IMR-90 (cell line): ENCODE measurements at regions of chr11 and their contacts with region 1.

Region 1: DNA sequence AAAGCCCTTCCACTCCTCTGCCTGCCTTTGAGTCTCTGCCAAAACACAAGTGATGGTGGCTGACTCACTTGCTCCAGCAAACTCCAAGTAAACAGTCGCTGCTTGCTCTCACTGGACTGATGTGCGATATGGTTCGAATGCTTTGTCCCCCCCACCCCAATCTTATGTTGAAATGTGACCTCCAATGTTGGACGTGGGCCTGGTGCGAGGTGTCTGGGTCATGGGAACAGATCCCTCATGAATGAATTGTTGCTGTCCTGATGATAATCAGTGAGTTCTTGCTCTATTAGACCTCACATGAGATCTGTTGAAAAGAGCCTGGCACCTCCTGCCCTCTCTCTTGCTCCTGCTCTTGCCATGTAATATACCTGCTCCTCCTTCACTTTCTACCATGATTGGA is 747.9 kb downstream of the OPCML start:
- DNase-seq: peak; percentile 67
- ATAC-seq: peak; percentile 63; the same call in 1 of the 2 replicates
- H3K4me3 ChIP-seq: no peak overlapping the region
- H3K27ac ChIP-seq: no peak overlapping the region
- H3K4me1 ChIP-seq: no peaks in the 10 kb centered on the region
- H3K27me3 ChIP-seq: no peaks in the 10 kb centered on the region
- CTCF ChIP-seq: no peak
- POLR2A ChIP-seq: no peak
- RAD21 ChIP-seq: no peak

Region 2: DNA sequence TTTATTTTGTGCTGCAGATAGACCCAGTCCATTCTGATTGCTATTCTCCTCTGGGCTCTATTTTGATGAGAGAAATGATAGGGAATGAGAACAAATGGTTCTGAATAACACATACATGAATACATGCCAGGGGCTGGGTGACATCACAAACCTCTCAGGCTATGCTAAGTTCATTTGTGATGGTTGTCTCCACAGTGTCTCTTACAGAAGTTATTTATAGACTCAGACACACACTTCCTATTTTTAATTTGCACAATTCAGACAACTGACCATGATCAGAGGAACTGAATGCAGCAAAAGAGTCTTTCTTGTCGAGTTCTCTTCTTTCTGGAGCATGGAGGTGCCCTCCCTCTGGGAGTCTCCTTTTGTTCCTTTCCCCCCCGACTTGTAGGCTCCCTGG is 243.9 kb before region 1 on chr11:
- CTCF ChIA-PET with region 1: no interaction called
- POLR2A ChIA-PET with region 1: no interaction called
- dilution Hi-C with region 1: no loop called
- in situ Hi-C with region 1: no loop called
- intact Hi-C with region 1: loop called (anchors 10 kb)
- DNase-seq: no peak
- ATAC-seq: no peak
- H3K4me3 ChIP-seq: no peak overlapping the region
- H3K27ac ChIP-seq: no peak overlapping the region
- H3K4me1 ChIP-seq: no peaks in the 10 kb centered on the region
- H3K27me3 ChIP-seq: no peaks in the 10 kb centered on the region
- CTCF ChIP-seq: no peak
- POLR2A ChIP-seq: no peak
- RAD21 ChIP-seq: no peak